GM10248 (cell line): ENCODE measurements at regions of chr7 and their contacts with region 1.

Region 1: DNA sequence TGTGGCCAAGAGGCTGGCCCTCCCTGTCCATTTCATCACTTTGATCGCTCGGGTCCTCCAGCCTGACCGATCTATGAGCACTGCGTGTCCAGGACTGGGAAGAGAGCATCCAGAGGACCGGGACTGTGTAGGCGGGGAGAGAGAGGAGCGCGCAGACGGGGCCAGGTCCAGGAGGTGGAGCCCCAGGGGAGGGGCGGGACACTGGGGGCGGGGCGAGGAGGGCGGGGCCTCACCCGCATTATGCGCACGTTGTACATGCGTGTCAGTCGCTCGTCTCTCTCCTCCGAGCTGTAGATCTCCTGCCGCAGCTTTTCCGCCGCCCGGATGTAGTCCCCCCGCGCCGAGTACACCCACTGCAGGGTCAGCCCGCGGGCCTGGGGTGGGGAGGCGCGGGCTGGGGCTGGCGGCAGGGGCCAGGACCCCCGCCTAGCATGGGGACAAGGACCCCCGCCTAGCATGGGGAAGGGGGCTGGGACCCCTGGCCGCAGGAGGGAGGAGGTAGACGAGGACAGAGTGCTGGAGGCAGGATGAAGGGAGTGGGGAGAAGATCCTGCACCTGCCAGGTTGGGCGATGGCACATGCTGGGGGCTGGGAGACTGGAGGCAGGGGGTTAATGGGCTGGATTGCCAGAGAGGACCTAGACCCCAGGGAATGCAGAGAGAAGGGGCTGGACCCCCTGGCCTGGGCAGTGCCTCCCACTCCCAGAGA is 14.3 kb downstream of the MOSPD3 start:
- DNase-seq: peak; percentile 97
- CTCF ChIP-seq: no peak

Region 2: DNA sequence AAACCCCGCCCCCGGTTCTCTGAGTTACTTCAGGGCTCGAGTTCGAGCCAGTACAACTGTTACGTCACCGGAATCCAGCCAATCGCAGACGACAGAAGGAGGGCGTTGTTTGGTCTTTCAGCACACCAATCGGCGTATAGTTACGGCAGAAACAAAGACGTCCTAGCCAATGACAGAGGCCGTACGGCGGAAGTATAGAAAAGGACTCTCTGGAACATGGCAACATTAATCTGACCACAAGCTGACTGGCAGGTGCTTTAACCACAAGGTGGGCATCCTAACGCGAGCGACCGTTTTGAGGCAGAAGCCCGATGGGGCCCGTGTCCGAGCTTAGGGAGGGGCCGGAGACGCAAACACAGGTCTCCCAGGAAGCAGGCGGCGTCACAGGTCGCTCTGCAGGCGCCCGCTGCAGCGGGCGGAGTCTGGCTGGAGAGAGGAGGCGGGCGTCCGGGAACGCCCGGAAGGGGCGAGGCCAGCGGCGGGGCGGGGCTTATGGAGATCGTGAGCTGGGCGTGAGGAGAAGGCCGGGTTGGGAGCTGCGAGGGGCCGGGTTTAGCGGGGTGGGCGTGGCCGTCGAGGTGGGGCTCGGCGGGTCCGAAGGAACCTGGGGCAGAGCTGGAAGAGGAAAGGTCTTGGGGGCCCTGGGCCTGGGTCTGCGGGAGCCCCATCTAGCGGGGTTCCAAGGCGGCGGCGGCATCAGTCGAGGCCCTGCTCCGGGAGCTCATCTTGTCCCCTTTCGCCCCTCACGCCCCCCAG is 14.5 kb before region 1 on chr7 and contains the start of gene MOSPD3:
- CTCF ChIA-PET with region 1: interaction called, 13 read pairs
- POLR2A ChIA-PET with region 1: no interaction called
- DNase-seq: peak; percentile 99
- CTCF ChIP-seq: no peak